KBM-7 (cell line): ENCODE measurements at regions of chr20 and their contacts with region 1.

Region 1: DNA sequence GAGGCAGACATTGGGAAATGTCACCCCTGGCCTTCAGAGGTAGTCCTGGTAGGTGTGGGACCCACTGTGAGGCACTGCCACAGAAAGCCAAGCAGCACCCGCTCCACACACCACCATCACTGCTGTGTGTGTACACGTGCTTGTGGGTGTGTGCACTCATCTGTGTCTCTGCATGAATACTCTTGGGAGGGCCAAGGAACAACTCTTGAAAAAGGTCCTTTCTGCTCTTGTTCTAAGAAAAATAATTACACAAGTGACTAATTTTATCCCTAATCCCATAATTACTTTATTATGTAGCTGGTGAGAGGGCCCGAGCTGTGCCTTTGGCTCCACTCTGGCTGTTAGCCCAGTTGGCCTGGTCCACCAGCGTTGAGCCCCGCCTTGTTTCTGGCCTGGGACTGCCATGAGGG is 21.7 kb upstream of the EPB41L1 start:
- DNase-seq: no peak

Region 2: GRCh38 chr20:35981969-35982368 is 150.8 kb before region 1 on chr20:
- in situ Hi-C with region 1: loop called (anchors 10 kb)
- DNase-seq: no peak